ENCODE measurements at regions of chr2 and their contacts with region 1.

Region 1: DNA sequence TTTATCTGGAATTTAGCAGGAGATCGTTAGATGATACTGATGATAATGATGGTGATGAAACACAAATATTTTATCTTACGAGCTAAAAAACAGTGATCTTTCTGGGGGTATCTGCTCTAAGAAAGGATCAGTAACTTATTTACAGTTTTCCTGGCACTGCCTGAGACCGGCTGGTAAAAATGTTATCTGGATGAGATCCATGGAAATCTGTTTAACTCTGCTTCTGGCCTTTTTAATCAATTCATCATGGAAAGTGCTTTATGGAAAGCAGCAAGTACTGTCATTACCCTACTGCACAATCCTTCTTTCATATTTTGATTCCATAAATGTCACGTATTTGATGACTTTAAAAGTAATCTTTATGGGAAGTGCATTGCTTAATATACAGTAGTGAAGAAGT is 612.7 kb upstream of the GCFC2 start:
- DNase-seq: no peak
- H3K4me3 ChIP-seq: no peak overlapping the region
- H3K27ac ChIP-seq: no peak overlapping the region
- H3K4me1 ChIP-seq: no peaks in the 10 kb centered on the region
- H3K27me3 ChIP-seq: no peaks in the 10 kb centered on the region
- CTCF ChIP-seq: no peak
- EP300 ChIP-seq: no peak
- POLR2A ChIP-seq: no peak

Region 2: DNA sequence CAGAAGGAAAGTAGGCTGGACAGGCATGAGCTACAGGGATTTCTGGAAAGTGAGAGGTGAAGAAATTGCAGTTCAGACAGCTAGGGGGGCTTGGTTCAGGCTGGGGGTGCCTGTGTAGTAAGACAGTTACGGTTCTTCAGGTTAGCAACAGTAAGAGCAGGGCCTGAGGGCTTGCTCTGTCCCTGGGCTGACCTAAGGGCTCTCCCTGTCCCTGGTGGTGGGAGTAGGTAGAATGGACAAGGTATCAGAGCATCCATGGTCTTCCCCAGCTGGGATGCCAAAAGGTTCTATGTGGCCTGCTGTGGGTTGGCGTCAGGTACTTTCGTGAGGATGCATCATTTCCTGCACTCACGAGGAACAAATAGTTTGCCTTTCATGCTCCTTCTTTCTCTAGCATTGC is 1089.4 kb before region 1 on chr2:
- in situ Hi-C with region 1: no loop called
- intact Hi-C with region 1: loop called (anchors 5 kb)
- DNase-seq: no peak
- H3K4me3 ChIP-seq: no peak overlapping the region
- H3K27ac ChIP-seq: no peak overlapping the region
- H3K4me1 ChIP-seq: no peaks in the 10 kb centered on the region
- H3K27me3 ChIP-seq: no peaks in the 10 kb centered on the region
- CTCF ChIP-seq: no peak
- EP300 ChIP-seq: no peak
- POLR2A ChIP-seq: no peak

Region 3: GRCh38 chr2:76563730-76564129 is 240.3 kb after region 1 on chr2:
- in situ Hi-C with region 1: no loop called
- intact Hi-C with region 1: no loop called
- DNase-seq: no peak
- H3K4me3 ChIP-seq: no peak overlapping the region
- H3K27ac ChIP-seq: no peak overlapping the region
- H3K4me1 ChIP-seq: no peaks in the 10 kb centered on the region
- H3K27me3 ChIP-seq: no peaks in the 10 kb centered on the region
- CTCF ChIP-seq: no peak
- EP300 ChIP-seq: no peak
- POLR2A ChIP-seq: no peak